Posterior vena cava (tissue), 2 donors: ENCODE measurements at regions of chr9 and their contacts with region 1.

Region 1: DNA sequence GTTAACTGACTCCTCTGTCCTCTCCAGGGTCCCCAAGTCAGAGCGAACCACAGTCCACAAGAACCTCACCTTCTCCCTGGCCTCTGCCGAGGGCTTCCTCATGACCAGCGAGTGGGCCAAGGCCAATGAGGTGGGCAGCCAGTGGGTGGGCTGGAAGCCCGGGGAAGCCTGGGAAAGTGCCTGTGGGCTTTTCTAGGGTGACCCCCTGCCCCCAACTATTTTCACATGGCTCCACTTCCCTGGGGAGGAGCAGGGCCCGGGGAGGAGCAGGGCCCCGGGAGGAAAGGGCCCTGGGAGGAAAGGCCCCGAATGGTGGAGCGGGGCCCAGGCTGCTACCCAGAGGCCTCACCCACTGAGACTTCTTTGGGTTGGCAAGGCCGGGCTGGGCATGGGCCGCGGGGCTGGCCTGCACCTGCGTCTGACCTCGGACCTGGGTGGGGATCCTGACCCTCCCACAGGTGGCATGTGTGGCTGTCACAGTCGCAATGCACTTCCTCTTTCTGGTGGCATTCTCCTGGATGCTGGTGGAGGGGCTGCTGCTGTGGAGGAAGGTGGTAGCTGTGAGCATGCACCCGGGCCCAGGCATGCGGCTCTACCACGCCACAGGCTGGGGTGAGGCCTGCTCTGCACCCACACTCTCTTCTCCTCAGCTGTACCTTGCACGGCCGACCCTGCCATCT is 17.9 kb downstream of the ADGRD2 start:
- DNase-seq: peak; percentile 71

Region 2: GRCh38 chr9:125626187-125626586 is 1158.0 kb after region 1 on chr9:
- intact Hi-C with region 1: no loop called
- DNase-seq: no peak

Region 3: GRCh38 chr9:125763394-125763801 is 1295.2 kb after region 1 on chr9:
- intact Hi-C with region 1: loop called in 1 of 2 experiments (anchors 5 kb)
- DNase-seq: no peak